Aorta (tissue), 5 donors: ENCODE measurements at regions of chr2 and their contacts with region 1.

Region 1: GRCh38 chr2:165401285-165401852 is 68.1 kb upstream of the CSRNP3 start:
- DNase-seq: no peak
- ATAC-seq: peak; percentile 73
- H3K4me3 ChIP-seq: no peak overlapping the region
- H3K27ac ChIP-seq: no peak overlapping the region
- H3K4me1 ChIP-seq: no peaks in the 10 kb centered on the region
- H3K27me3 ChIP-seq: no peaks in the 10 kb centered on the region

Region 2: DNA sequence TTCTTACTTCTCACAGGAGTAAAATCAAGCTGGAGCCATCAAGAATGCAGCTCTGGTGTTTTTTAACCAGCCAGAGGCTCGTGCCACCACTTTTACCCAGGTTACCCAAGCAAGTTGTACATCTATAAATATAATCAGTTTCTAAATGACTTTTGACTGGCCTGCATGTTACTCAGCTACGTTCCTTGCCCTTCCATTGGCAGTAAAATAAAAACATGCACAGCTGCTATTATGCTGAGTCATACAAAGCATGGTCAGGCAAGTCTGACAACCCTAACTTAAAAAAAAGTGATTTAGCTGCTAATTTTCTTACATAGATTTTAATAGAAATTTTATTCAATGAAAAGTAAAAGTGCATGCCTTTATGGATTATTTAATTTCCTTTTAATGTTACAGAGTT is 43.6 kb before region 1 on chr2:
- intact Hi-C with region 1: no loop called
- DNase-seq: no peak
- ATAC-seq: no peak
- H3K4me3 ChIP-seq: no peak overlapping the region
- H3K27ac ChIP-seq: no peak overlapping the region
- H3K4me1 ChIP-seq: peaks cover 0 to 1% of the 10 kb centered on the region in 2 donors
- H3K27me3 ChIP-seq: no peaks in the 10 kb centered on the region

Region 3: GRCh38 chr2:165698444-165698894 is 297.1 kb after region 1 on chr2:
- intact Hi-C with region 1: loop called (anchors 2 to 5 kb)
- DNase-seq: no peak
- ATAC-seq: no peak
- H3K4me3 ChIP-seq: no peak overlapping the region
- H3K27ac ChIP-seq: no peak overlapping the region
- H3K4me1 ChIP-seq: peaks cover 0 to 2% of the 10 kb centered on the region in 2 donors
- H3K27me3 ChIP-seq: no peaks in the 10 kb centered on the region

Region 4: GRCh38 chr2:165874445-165875039 is 473.2 kb after region 1 on chr2:
- intact Hi-C with region 1: loop called (anchors 2 to 5 kb)
- DNase-seq: no peak
- ATAC-seq: no peak
- H3K4me3 ChIP-seq: no peak overlapping the region
- H3K27ac ChIP-seq: no peak overlapping the region
- H3K4me1 ChIP-seq: no peaks in the 10 kb centered on the region
- H3K27me3 ChIP-seq: no peaks in the 10 kb centered on the region

Region 5: DNA sequence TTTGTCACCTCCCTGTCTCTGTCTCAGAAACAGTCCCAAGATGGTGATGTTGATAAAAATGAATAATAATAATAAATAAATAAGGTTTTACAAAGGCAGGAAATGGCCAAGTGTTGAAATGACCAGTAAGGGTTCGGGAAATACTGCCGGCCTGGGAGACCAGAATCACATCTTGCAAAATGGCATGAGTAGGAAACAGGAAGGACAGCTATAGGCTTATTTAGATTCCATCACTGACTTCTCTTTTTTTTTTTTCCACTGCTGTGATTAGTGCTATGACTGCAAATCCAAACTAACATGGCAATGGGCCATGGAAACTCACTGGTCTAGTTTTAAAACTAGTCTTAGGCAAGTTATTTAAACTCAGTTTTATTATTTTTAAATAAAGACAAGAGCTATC is 665.9 kb after region 1 on chr2:
- intact Hi-C with region 1: no loop called
- DNase-seq: no peak
- ATAC-seq: no peak
- H3K4me3 ChIP-seq: no peak overlapping the region
- H3K27ac ChIP-seq: no peak overlapping the region
- H3K4me1 ChIP-seq: no peaks in the 10 kb centered on the region
- H3K27me3 ChIP-seq: no peaks in the 10 kb centered on the region